Astrocyte of the cerebellum (primary cell): ENCODE measurements at regions of chr20 and their contacts with region 1.

Region 1: GRCh38 chr20:62386383-62387218 is at the start of gene RPS21:
- DNase-seq: peak; percentile 70
- H3K4me3 ChIP-seq: peak within 1 kb of the TSS; percentile 80
- CTCF ChIP-seq: no peak

Region 2: DNA sequence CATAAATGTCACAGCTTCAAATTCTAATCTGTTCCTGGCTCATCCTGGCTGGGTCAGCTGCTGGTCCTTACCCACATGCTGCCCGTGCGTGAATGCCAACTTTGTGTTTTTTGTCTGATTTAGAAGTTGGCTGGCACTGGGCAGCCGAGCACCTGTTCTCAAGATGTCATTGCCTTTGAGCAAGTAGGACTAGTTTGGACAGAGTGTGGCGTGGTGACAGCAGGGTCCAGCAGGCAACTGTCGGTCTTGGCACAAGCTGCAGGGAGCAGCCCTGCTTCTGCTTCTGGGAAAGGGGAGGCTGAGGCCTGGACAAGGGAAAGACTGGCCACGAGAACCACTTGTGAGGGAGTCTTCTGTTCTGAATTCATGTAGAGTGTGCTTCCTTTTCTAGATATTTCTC is 110.2 kb before region 1 on chr20:
- in situ Hi-C with region 1: loop called (anchors 25 kb)
- DNase-seq: no peak
- H3K4me3 ChIP-seq: no peak overlapping the region
- CTCF ChIP-seq: no peak

Region 3: DNA sequence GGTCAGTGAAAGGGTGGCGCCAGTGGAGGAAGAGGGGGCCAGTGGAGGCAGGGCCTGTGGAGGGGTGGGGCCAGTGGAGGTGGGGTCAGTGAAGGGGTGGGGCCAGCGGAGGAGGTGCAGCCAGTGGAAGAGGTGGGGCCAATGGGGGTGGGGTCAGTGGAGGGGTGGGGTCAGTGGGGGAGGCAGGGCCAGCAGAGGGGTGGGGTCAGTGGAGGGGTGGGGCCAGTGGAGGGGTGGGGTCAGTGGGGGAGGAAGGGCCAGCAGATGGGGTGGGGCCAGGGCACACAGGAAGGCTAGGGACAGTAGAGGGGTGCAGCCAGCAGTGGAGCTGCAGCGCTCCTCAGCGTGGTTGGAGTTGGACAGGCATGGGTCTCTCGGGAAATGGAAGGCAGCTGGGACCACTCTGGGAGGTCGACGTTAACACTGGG is 65.1 kb before region 1 on chr20:
- in situ Hi-C with region 1: no loop called
- DNase-seq: no peak
- H3K4me3 ChIP-seq: no peak overlapping the region
- CTCF ChIP-seq: no peak

Region 4: GRCh38 chr20:62539198-62540045 is 152.8 kb after region 1 on chr20:
- in situ Hi-C with region 1: no loop called
- DNase-seq: no peak
- H3K4me3 ChIP-seq: no peak overlapping the region
- CTCF ChIP-seq: no peak